Activated CD4-positive, alpha-beta memory T cell treated with anti-CD3 and anti-CD28 coated beads, Interleukin-2, amount 10 ng/mL, durations not matched to agents 7 days and 5 days (primary cell): ENCODE measurements at regions of chr14 and their contacts with region 1.

Region 1: GRCh38 chr14:49461529-49462401 is 124.4 kb downstream of the RPS29 start:
- DNase-seq: peak; percentile 54
- H3K4me3 Mint-ChIP-seq: no peak overlapping the region
- H3K27ac Mint-ChIP-seq: no peak overlapping the region
- H3K4me1 Mint-ChIP-seq: no peaks in the 10 kb centered on the region
- H3K27me3 Mint-ChIP-seq: peaks cover 5% of the 10 kb centered on the region

Region 2: GRCh38 chr14:49206828-49207227 is 254.9 kb before region 1 on chr14:
- CTCF ChIA-PET with region 1: no interaction called
- POLR2A ChIA-PET with region 1: no interaction called
- DNase-seq: no peak
- H3K4me3 Mint-ChIP-seq: no peak overlapping the region
- H3K27ac Mint-ChIP-seq: no peak overlapping the region
- H3K4me1 Mint-ChIP-seq: no peaks in the 10 kb centered on the region
- H3K27me3 Mint-ChIP-seq: peaks cover 3% of the 10 kb centered on the region

Region 3: DNA sequence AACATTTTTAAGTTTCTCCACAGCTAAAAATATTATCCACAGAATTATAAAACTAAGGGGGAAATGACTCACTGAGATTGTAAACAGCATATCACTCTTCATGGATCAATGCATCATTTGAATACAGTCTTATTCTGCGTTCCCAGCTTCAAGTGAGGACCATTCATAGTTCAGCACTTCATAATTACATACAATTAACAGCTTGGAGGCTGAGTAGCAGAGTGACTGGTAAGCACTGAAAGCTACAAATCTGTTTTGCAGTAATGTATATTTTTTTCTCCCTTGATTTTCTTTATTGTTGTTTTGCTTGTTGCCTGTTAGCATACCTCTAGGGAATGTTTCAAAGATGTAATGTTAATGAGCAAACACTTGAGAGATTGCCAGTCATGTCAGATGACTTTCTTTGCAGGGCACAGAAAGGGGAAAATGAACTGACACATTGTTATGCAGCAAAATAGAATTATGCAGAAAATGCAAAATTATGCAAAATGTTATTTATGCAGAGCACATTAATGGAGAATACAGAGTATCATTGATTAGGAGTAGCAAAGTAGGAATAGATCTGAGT is 14.1 kb before region 1 on chr14:
- CTCF ChIA-PET with region 1: interaction called, 15 read pairs
- POLR2A ChIA-PET with region 1: no interaction called
- DNase-seq: no peak
- H3K4me3 Mint-ChIP-seq: no peak overlapping the region
- H3K27ac Mint-ChIP-seq: no peak overlapping the region
- H3K4me1 Mint-ChIP-seq: no peaks in the 10 kb centered on the region
- H3K27me3 Mint-ChIP-seq: peaks cover 12% of the 10 kb centered on the region

Region 4: GRCh38 chr14:49483268-49483667 is 21.5 kb after region 1 on chr14:
- CTCF ChIA-PET with region 1: interaction called, 19 read pairs
- POLR2A ChIA-PET with region 1: no interaction called
- DNase-seq: no peak
- H3K4me3 Mint-ChIP-seq: no peak overlapping the region
- H3K27ac Mint-ChIP-seq: no peak overlapping the region
- H3K4me1 Mint-ChIP-seq: peaks cover 6% of the 10 kb centered on the region
- H3K27me3 Mint-ChIP-seq: peaks cover 12% of the 10 kb centered on the region

Region 5: DNA sequence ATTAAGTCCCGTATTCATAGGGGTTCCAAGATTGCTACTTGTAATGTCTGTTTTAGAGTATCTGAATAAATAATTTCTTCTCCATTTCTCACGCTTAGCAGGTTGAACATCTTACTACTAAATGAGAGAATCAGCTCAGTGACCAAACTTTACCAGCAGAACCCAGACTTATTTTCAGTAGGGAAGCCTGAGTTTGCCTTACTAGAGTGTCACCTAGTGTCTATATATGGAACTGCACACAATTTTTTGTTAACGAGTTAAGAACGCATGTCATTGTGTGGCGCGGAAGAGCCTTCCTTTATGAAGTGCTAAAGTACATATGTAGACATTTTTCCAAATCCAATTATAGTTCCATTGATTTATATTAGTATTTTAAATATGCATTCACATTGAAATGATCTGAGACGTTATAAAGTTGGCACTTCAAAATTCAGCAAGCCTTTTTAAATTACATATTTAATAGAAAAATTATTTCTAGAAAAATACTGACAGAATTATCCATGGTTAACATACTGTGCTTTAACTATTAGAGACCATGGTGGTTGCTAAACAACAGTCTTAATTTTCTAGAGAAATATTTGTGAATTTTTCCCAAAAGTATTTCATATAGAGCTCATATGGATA is 36.1 kb after region 1 on chr14:
- CTCF ChIA-PET with region 1: interaction called, 96 read pairs
- POLR2A ChIA-PET with region 1: no interaction called
- DNase-seq: no peak
- H3K4me3 Mint-ChIP-seq: no peak overlapping the region
- H3K27ac Mint-ChIP-seq: no peak overlapping the region
- H3K4me1 Mint-ChIP-seq: no peaks in the 10 kb centered on the region
- H3K27me3 Mint-ChIP-seq: peaks cover 23% of the 10 kb centered on the region

Region 6: DNA sequence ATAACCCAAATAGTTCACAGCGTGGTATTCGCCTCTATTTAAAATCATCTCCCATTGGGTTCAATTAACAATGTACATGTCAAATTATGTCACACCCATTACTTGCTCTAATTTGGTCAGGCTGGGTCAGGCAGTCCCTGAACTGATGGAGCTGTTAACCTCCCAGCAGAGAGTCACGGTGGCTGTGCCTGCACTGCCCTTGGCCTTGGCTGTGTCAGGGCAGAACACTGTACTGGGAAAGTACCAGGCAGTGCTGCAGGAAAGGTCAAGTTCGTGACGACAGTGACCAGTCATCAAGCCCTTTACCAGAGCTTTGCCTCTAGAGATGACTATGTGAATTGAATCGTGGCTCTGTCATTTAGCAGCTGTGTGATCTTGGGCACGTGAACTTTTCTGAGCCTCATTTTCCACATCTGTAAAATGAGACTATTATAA is 531.2 kb after region 1 on chr14:
- CTCF ChIA-PET with region 1: no interaction called
- POLR2A ChIA-PET with region 1: no interaction called
- DNase-seq: peak; percentile 39
- H3K4me3 Mint-ChIP-seq: peak overlapping the region; percentile 28
- H3K27ac Mint-ChIP-seq: peak overlapping the region; percentile 66
- H3K4me1 Mint-ChIP-seq: peaks cover 33% of the 10 kb centered on the region
- H3K27me3 Mint-ChIP-seq: no peaks in the 10 kb centered on the region